ENCODE measurements at regions of chr16 and their contacts with region 1.

Region 1: GRCh38 chr16:29973384-29974246 is at the start of gene TAOK2:
- H3K4me3 ChIP-seq: peak within 1 kb of the TSS; percentile 72
- H3K27ac ChIP-seq: peak within 1 kb of the TSS; percentile 76
- H3K4me1 ChIP-seq: peaks cover 8% of the 10 kb centered on the region
- CTCF ChIP-seq: no peak

Region 2: GRCh38 chr16:29745121-29745852 is 228.3 kb before region 1 on chr16:
- CTCF ChIA-PET with region 1: no interaction called
- POLR2A ChIA-PET with region 1: no interaction called
- H3K4me3 ChIP-seq: no peak overlapping the region
- H3K27ac ChIP-seq: no peak overlapping the region
- H3K4me1 ChIP-seq: no peaks in the 10 kb centered on the region
- CTCF ChIP-seq: no peak

Region 3: GRCh38 chr16:29900102-29900887 is 73.3 kb before region 1 on chr16 and contains the start of gene ASPHD1:
- CTCF ChIA-PET with region 1: interaction called, 4 read pairs
- POLR2A ChIA-PET with region 1: interaction called, 13 read pairs
- H3K4me3 ChIP-seq: peak within 1 kb of the TSS; percentile 51
- H3K27ac ChIP-seq: no peak within 1 kb of the TSS
- H3K4me1 ChIP-seq: peaks cover 2% of the 10 kb centered on the region; the same call in 1 of the 2 replicates
- CTCF ChIP-seq: no peak

Region 4: GRCh38 chr16:29926005-29926710 is 47.5 kb before region 1 on chr16 and contains the start of gene KCTD13:
- CTCF ChIA-PET with region 1: interaction called, 8 read pairs
- POLR2A ChIA-PET with region 1: interaction called, 58 read pairs
- H3K4me3 ChIP-seq: peak within 1 kb of the TSS; percentile 97
- H3K27ac ChIP-seq: peak within 1 kb of the TSS; percentile 73
- H3K4me1 ChIP-seq: peaks cover 4% of the 10 kb centered on the region; the same call in 1 of the 2 replicates
- CTCF ChIP-seq: no peak; the same call in 1 of the 2 replicates

Region 5: DNA sequence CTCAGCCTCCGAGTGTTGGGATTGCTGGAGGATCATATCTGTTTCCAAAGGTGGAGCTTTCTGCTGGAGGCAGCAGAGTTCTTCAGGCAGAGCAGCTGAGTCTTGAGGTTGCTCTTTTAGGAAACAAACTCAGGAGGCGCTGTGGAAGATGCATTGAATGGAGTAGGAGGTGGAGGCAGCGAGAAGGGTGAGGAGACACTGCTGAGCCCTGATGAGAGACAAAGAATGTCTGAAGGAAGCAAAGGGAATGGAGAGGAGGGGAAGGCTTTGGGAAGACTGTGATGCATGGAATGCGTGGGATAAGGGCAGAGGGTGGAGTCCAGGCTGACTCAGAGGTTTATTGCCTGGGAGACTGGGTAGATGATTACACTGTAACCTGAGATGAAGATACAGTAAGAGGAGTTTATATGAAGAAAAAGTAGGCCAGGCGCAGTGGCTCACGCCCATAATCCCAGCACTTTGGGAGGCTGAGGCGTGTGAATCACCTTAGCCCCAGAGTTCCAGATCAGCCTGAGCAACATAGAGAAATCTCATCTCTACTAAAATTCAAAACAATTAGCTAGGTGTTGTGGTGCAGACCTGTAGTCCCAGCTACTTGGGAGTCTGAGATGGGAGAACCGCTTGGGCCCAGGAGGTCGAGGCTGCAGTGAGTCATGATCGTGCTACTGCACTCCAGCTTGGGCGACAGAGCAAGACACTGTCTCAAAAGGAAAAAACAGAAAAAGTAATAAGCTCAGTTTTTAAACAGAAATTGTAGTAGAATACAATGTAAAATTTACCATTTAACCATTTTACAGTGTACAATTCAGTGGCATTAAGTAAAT is 29.6 kb before region 1 on chr16:
- CTCF ChIA-PET with region 1: interaction called, 7 read pairs
- POLR2A ChIA-PET with region 1: interaction called, 18 read pairs
- H3K4me3 ChIP-seq: peak overlapping the region; percentile 24
- H3K27ac ChIP-seq: peak overlapping the region; percentile 60
- H3K4me1 ChIP-seq: peaks cover 7% of the 10 kb centered on the region; the same call in 1 of the 2 replicates
- CTCF ChIP-seq: peak; percentile 87

Region 6: GRCh38 chr16:29961479-29962343 is 11.9 kb before region 1 on chr16 and contains the start of gene TMEM219:
- CTCF ChIA-PET with region 1: interaction called, 9 read pairs
- POLR2A ChIA-PET with region 1: interaction called, 55 read pairs
- H3K4me3 ChIP-seq: peak within 1 kb of the TSS; percentile 57
- H3K27ac ChIP-seq: peak within 1 kb of the TSS; percentile 44; the same call in 1 of the 2 replicates
- H3K4me1 ChIP-seq: 0 out of 2 replicates have a peak, but pooled peaks cover 3% of the 10 kb centered on the region
- CTCF ChIP-seq: peak; percentile 94

Region 7: DNA sequence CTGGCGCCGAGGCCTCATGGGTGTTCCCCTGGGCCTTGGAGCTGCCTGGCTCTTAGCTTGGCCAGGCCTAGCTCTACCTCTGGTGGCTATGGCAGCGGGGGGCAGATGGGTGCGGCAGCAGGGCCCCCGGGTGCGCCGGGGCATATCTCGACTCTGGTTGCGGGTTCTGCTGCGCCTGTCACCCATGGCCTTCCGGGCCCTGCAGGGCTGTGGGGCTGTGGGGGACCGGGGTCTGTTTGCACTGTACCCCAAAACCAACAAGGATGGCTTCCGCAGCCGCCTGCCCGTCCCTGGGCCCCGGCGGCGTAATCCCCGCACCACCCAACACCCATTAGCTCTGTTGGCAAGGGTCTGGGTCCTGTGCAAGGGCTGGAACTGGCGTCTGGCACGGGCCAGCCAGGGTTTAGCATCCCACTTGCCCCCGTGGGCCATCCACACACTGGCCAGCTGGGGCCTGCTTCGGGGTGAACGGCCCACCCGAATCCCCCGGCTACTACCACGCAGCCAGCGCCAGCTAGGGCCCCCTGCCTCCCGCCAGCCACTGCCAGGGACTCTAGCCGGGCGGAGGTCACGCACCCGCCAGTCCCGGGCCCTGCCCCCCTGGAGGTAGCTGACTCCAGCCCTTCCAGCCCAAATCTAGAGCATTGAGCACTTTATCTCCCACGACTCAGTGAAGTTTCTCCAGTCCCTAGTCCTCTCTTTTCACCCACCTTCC is 13.9 kb after region 1 on chr16:
- CTCF ChIA-PET with region 1: interaction called, 5 read pairs
- POLR2A ChIA-PET with region 1: interaction called, 22 read pairs
- H3K4me3 ChIP-seq: no peak overlapping the region
- H3K27ac ChIP-seq: no peak overlapping the region
- H3K4me1 ChIP-seq: no peaks in the 10 kb centered on the region
- CTCF ChIP-seq: no peak

Region 8: GRCh38 chr16:29995911-29996772 is 22.5 kb after region 1 on chr16 and contains the start of gene INO80E:
- CTCF ChIA-PET with region 1: interaction called, 3 read pairs
- POLR2A ChIA-PET with region 1: interaction called, 42 read pairs
- H3K4me3 ChIP-seq: peak within 1 kb of the TSS; percentile 93
- H3K27ac ChIP-seq: peak within 1 kb of the TSS; percentile 91
- H3K4me1 ChIP-seq: no peaks in the 10 kb centered on the region; the same call in 1 of the 2 replicates
- CTCF ChIP-seq: no peak; the same call in 1 of the 2 replicates

Region 9: GRCh38 chr16:30041846-30042267 is 68.2 kb after region 1 on chr16:
- CTCF ChIA-PET with region 1: no interaction called
- POLR2A ChIA-PET with region 1: no interaction called
- H3K4me3 ChIP-seq: no peak overlapping the region
- H3K27ac ChIP-seq: no peak overlapping the region
- H3K4me1 ChIP-seq: no peaks in the 10 kb centered on the region
- CTCF ChIP-seq: peak; percentile 78

Measured in HEK293 (cell line).